ENCODE measurements at regions of chr5 and their contacts with region 1.

Region 1: DNA sequence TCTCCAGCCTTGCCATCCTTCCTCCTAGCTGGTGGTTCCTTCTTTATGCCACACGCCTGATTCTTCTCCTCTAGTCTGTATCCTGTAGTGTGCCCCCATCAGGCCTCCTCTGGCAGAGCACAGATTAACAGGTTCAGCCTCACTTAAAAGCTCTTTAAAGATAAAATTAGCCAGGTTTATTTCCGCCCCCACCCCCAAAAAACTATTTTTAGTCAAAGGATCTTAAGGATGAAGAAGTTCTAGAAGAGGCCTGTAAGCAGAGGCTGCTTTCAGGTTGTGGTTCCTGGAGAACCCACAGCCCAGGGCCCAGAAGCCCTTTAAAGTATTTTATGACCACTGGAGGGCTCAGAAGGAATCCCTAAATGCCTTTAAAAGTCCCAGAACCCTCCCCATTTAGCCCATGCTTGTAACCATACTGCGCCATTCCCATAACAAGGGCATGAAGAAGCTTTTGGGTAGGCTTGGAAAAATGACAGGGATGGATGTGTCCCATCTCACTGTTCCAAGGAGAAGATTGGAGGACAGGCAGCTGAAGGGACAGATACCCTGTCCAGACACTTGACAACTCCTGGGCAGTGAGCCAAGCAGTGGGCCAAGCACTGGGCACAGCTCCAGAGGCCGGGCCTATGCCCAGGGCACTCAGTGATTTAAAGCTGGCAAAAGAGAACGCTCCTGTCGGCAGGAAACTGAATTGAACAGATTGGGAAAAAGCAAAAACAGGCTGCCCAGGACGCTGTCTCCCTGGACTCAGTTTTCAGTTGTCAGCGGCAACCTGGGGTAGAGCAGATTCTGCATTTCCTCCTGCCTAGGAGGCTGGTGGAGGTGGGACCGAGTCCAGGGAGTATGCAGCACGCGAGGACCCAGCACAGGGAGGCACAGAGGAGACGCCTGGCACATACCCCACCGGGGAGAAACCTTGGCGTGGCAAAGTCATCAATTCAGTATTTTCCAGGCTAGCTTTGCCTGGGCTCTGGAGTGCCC is 106.3 kb upstream of the SSBP2 start:
- DNase-seq: peak; percentile 81
- H3K4me3 ChIP-seq: peak overlapping the region; percentile 28 to 37; a peak in 3 of 4 replicates
- H3K27ac ChIP-seq: peak overlapping the region; percentile 70 to 98
- H3K4me1 ChIP-seq: peaks cover 46 to 50% of the 10 kb centered on the region in 2 experiments
- H3K27me3 ChIP-seq: no peaks in the 10 kb centered on the region
- CTCF ChIP-seq: peak; percentile 52
- EP300 ChIP-seq: peak; percentile 51 to 87; a peak in 3 of 4 replicates
- RAD21 ChIP-seq: peak; percentile 35

Region 2: DNA sequence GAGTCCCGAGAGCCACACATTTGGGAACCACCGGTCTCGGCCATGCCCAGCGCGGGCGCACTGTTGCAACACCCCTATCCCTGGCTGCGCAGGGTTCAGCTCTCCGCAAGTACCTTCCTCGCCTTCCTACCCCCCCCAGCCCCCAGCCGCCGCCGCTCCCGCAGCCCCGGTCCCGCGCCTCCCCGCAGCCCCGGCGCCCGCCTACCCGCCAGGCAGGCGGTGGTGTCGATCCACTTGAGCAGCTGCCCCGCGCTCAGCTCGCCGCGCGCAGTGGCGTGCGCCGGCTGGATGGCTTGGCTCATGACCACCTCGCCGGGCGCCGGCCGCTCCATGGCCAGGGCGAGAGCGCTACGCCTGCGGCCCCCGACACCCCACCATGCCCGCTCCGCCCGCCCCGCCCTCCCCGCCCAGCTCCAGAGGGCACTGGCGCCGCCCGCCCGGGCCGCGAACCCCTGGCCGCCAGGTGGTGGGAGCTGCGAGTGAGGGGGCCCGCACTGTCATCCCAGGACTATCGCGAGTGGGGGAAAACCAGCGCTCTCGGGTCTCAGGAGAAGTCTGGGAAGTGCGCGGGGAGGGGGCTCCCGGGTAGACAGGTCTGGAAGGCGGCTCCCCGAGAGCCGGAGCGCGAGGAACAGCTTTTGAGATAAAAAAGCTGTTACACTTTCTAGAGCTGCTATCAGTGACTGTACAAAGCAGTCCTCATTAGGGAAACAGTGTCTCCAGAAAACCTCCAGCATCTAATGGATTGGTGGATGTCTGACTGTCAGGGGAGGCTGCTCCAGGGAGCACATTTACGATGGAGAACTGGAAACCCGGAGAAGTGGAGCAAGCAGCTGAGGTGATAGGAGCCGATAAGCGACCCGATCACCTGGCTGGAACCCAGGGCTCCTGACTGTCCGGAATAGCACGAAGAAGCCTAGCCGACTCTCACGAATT is 463.2 kb before region 1 on chr5 and contains the start of gene ACOT12:
- CTCF ChIA-PET with region 1: no interaction called
- POLR2A ChIA-PET with region 1: no interaction called
- DNase-seq: peak; percentile 73
- H3K4me3 ChIP-seq: peak within 1 kb of the TSS; percentile 42 to 59
- H3K27ac ChIP-seq: no peak within 1 kb of the TSS
- H3K4me1 ChIP-seq: no peaks in the 10 kb centered on the region; a peak in 1 of 4 replicates
- H3K27me3 ChIP-seq: no peaks in the 10 kb centered on the region
- CTCF ChIP-seq: no peak
- EP300 ChIP-seq: no peak
- RAD21 ChIP-seq: no peak
- polyA plus RNA-seq, gene ACOT12: 0.07 and 0.19 TPM in 2 replicates

Region 3: GRCh38 chr5:81838307-81838906 is 18.8 kb before region 1 on chr5:
- CTCF ChIA-PET with region 1: interaction called, 22 read pairs
- POLR2A ChIA-PET with region 1: interaction called, 5 read pairs
- DNase-seq: no peak
- H3K4me3 ChIP-seq: no peak overlapping the region
- H3K27ac ChIP-seq: no peak overlapping the region; a peak in 1 of 4 replicates
- H3K4me1 ChIP-seq: peaks cover 3 to 27% of the 10 kb centered on the region in 2 experiments; a peak in 2 of 4 replicates
- H3K27me3 ChIP-seq: no peaks in the 10 kb centered on the region
- CTCF ChIP-seq: peak; percentile 59
- EP300 ChIP-seq: no peak
- RAD21 ChIP-seq: peak; percentile 52

Region 4: DNA sequence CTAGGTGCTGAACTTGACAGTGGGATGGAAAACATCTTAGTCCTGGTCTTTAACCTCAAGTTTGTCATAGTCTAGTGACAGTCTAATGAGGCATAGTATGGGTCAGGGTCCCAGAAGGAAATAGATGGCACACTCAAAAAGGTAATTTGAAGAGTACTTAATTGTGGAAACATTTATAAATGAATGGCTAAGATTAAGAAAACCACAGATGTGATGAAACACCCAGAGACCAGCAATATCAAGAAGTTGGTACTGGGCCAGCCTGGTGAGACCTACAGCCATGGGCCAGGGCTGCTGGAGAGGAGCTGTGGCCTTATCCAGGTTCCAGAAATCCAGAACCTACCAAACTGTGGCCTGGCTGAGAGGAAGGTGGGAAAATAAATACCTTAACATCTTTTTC is 21.1 kb after region 1 on chr5:
- CTCF ChIA-PET with region 1: interaction called, 19 read pairs
- POLR2A ChIA-PET with region 1: no interaction called
- DNase-seq: no peak
- H3K4me3 ChIP-seq: no peak overlapping the region
- H3K27ac ChIP-seq: no peak overlapping the region
- H3K4me1 ChIP-seq: no peaks in the 10 kb centered on the region; a peak in 1 of 4 replicates
- H3K27me3 ChIP-seq: no peaks in the 10 kb centered on the region
- CTCF ChIP-seq: no peak
- EP300 ChIP-seq: no peak
- RAD21 ChIP-seq: no peak

Region 5: DNA sequence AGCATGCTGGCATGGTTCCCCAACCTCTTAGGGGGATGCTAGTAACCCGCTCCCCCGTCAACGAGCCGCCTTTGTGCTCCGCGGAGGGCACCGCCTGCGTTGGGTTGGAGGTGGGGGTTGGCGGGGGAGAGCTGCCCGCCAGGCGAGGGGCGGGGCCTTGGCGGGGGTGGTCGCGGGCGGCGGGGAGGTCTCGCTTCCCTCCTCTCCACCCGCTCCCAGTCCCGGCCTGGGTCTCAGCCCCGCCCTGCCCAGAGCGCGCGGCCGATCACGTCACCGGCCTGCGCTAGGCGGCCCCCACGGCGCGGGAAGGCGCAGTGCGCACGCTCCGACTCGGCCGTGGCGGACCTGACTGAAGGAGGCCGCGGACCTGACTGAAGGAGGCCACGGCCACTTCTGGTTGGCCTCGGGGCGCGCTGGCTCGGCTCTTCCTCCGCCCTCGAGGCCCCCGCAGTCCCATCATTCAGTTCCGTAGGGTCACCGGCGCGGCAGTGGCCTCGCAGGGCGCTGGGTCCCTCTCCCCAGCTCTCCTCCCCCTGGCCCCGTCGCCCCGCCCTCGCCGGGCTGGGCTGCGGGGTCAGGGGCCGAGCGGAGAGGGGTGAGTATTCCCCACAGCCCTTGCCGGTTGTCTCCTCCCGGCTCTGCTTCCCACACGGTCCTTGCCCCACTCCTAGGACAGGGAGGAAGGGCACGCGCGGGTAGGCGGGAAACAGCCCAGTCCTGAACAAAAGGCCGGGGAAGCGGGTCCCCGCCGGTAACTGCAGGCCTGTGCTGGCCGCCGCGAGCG is 114.7 kb after region 1 on chr5 and contains the start of gene ATG10:
- CTCF ChIA-PET with region 1: interaction called, 14 read pairs
- POLR2A ChIA-PET with region 1: interaction called, 16 read pairs
- DNase-seq: peak; percentile 99
- H3K4me3 ChIP-seq: peak within 1 kb of the TSS; percentile 80 to 84
- H3K27ac ChIP-seq: peak within 1 kb of the TSS; percentile 92 to 98
- H3K4me1 ChIP-seq: peaks cover 0 to 8% of the 10 kb centered on the region in 2 experiments; a peak in 3 of 4 replicates
- H3K27me3 ChIP-seq: no peaks in the 10 kb centered on the region
- CTCF ChIP-seq: no peak
- EP300 ChIP-seq: peak in 1 of 2 experiments; percentile 33; a peak in 1 of 4 replicates
- RAD21 ChIP-seq: no peak
- polyA plus RNA-seq, gene ATG10: 3.2 and 3.4 TPM in 2 replicates

Measured in SK-N-SH (cell line).